ENCODE measurements at regions of chr14 and their contacts with region 1.

Region 1: GRCh38 chr14:52010173-52010693 is 20.9 kb downstream of the RTRAF start:
- DNase-seq: no peak
- H3K4me3 ChIP-seq: no peak overlapping the region
- H3K27ac ChIP-seq: no peak overlapping the region
- H3K4me1 ChIP-seq: peaks cover 0 to 15% of the 10 kb centered on the region in 2 experiments; a peak in 2 of 4 replicates
- H3K27me3 ChIP-seq: no peaks in the 10 kb centered on the region
- CTCF ChIP-seq: no peak
- EP300 ChIP-seq: no peak
- RAD21 ChIP-seq: no peak

Region 2: GRCh38 chr14:51996148-51996746 is 14.0 kb before region 1 on chr14:
- CTCF ChIA-PET with region 1: interaction called, 11 read pairs
- POLR2A ChIA-PET with region 1: no interaction called
- DNase-seq: no peak
- H3K4me3 ChIP-seq: no peak overlapping the region; a peak in 1 of 4 replicates
- H3K27ac ChIP-seq: peak overlapping the region in 1 of 2 experiments; percentile 19; a peak in 1 of 4 replicates
- H3K4me1 ChIP-seq: peaks cover 0 to 21% of the 10 kb centered on the region in 2 experiments; a peak in 2 of 4 replicates
- H3K27me3 ChIP-seq: no peaks in the 10 kb centered on the region
- CTCF ChIP-seq: peak; percentile 88
- EP300 ChIP-seq: no peak
- RAD21 ChIP-seq: peak; percentile 66

Region 3: GRCh38 chr14:52189330-52189729 is 179.1 kb after region 1 on chr14:
- CTCF ChIA-PET with region 1: no interaction called
- POLR2A ChIA-PET with region 1: no interaction called
- DNase-seq: no peak
- H3K4me3 ChIP-seq: no peak overlapping the region
- H3K27ac ChIP-seq: no peak overlapping the region
- H3K4me1 ChIP-seq: no peaks in the 10 kb centered on the region
- H3K27me3 ChIP-seq: no peaks in the 10 kb centered on the region; the same call in 1 of the 2 replicates
- CTCF ChIP-seq: no peak
- EP300 ChIP-seq: no peak
- RAD21 ChIP-seq: no peak